Head of caudate nucleus (tissue), 42 donors: ENCODE measurements at regions of chr3 and their contacts with region 1.

Region 1: GRCh38 chr3:29275309-29275708 is 5.6 kb upstream of the RBMS3 start:
- DNase-seq: no peak

Region 2: DNA sequence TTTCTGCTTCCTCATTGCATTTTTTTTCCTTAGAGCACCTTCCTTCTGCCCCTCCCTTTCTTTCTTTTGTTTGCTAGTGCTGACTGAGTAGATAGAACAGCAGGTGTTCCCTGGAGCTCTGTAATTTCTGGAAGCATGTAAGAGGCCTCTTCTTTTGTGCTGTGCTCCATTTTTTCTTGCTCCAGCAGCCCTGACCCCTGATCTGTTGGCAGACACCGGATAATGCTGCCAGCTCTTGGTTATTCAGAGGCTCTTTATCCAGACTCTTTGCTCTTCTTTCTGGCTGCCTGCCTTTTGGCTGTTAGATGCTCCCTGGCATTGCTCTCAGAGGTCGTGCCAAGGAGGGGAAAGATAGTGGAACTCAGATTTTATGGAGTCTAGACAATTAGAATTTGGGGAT is 98.8 kb before region 1 on chr3:
- intact Hi-C with region 1: no loop called
- DNase-seq: peak in 15 of 42 donors; percentile 3 to 40 (median 13)

Region 3: GRCh38 chr3:29212789-29213433 is 62.4 kb before region 1 on chr3:
- intact Hi-C with region 1: loop called (anchors 2 kb)
- DNase-seq: no peak